ENCODE measurements at regions of chr14 and their contacts with region 1.

Region 1: DNA sequence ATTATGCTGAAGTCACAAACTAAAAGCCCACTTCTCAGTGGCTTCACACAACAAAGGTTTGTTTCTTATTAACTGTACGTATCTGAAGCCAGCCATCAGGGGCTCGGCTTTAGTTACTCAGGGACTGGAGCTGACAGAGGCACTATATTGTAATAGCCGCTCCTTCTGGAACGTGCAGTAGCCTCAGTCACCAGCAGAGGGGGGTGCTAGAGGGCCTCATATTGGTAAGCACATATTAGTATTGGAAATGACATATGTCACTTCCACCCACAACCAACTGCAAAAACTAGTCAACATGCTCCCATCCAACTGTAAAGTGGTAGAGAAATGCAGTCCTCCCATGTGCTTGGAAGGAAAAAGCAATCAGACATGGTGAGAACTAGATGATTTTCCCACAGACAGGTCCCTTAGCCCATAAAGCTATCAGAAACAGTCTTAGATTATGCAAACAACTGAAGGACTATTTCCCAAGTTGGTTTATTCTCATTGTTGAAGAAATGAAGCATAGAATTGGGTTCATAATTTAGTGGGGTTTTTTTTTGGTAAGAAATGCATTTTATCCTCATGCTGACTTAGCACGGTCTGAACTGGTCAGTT is 183.6 kb upstream of the G2E3 start:
- DNase-seq: peak; percentile 66
- H3K4me3 Mint-ChIP-seq: no peak overlapping the region
- H3K27ac Mint-ChIP-seq: no peak overlapping the region
- H3K4me1 Mint-ChIP-seq: no peaks in the 10 kb centered on the region
- H3K27me3 Mint-ChIP-seq: peaks cover 6% of the 10 kb centered on the region

Region 2: DNA sequence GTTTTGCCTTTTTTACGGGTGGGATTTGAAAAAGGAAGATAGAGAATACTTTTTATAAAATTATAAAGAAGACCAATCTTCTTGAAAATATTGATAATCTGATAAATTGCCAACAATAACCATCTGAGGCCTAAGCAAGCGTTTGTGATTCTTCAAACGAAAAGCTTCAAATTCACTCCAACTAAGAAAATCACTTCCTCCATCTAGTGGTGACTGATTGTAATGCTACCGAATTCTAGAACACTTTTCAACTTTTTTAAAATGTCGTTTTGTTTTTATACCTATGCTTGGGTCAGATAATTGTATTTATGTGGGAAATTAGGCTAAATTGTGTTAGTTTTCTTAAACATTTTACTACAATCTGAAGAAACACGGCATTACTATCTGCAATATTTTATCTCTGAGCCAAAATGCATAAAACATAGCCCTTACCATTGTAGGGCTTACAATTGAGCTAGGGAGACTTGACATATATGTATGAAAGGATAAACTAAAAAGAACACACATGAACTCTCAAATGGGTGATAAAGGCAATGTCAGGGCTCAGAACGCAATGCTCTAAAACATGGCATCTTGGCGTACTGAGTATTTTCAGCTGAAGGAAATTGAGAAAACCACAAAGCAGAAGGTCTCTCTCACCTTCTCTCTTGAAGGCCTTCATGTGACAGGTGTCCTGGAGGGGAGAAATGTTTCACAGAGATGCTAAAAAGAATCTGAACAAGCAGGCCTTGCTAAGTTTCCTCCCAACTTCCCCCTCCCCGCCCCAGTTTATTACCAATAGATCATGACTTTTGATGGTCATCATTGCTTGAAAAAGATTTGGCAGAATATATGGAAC is 146.7 kb after region 1 on chr14:
- CTCF ChIA-PET with region 1: interaction called, 25 read pairs
- POLR2A ChIA-PET with region 1: no interaction called
- DNase-seq: no peak
- H3K4me3 Mint-ChIP-seq: no peak overlapping the region
- H3K27ac Mint-ChIP-seq: no peak overlapping the region
- H3K4me1 Mint-ChIP-seq: peaks cover 6% of the 10 kb centered on the region
- H3K27me3 Mint-ChIP-seq: no peaks in the 10 kb centered on the region

Measured in activated CD4-positive, alpha-beta memory T cell treated with anti-CD3 and anti-CD28 coated beads, Interleukin-2, amount 10 ng/mL, durations not matched to agents 7 days and 5 days (primary cell).